Activated CD8-positive, alpha-beta T cell treated with anti-CD3 and anti-CD28 coated beads for 36 hours (primary cell): ENCODE measurements at regions of chr20 and their contacts with region 1.

Region 1: DNA sequence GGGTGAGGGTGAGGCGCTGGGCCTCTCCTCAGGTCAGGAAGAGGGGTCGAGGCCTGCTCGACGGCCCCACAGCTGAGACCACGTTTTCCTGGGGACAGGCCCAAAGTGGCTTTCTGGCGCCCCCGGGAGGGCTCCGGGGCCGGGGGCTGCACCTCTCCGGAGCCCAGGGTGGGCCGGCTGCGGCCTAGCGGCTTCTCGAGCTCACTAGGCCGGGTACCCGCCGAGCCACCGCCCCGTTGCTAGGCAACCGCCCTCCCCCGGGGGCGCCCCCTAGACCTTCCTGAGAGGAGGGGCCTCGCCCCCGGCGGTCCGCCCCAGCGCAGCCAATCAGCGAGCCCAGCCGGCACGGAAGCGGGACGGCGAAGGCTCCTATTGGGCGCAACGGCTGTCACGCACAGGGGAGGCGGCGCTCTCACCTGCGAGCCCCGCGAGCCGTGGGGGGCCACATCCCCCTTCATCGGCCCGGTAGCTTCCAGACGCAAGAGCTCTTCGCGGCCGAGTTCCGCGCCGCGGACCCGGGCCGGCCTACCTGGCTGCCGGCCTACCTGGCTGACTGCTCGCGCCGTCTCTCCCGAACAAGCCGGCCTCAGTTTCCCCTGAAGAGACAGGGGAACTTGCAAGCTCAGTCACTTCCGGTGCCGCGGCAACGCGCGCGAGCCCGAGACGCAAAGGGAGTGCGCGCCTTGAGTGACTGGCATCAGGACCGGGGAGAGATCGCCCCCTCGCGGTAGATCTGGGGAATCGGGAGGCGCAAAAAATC is 831 bp upstream of the BCL2L1 start:
- DNase-seq: peak; percentile 99
- ATAC-seq: peak; percentile 90
- H3K4me3 Mint-ChIP-seq: peak overlapping the region; percentile 97
- H3K27ac Mint-ChIP-seq: peak overlapping the region; percentile 97
- H3K4me1 Mint-ChIP-seq: peaks cover 4% of the 10 kb centered on the region
- H3K27me3 Mint-ChIP-seq: no peaks in the 10 kb centered on the region
- CTCF ChIP-seq: peak; percentile 94

Region 2: GRCh38 chr20:31605031-31605901 is 118.2 kb before region 1 on chr20 and contains the start of gene ID1:
- CTCF ChIA-PET with region 1: interaction called, 16 read pairs
- POLR2A ChIA-PET with region 1: no interaction called
- intact Hi-C with region 1: no loop called
- DNase-seq: peak; percentile 93
- ATAC-seq: peak; percentile 86
- H3K4me3 Mint-ChIP-seq: peak within 1 kb of the TSS; percentile 78
- H3K27ac Mint-ChIP-seq: no peak within 1 kb of the TSS
- H3K4me1 Mint-ChIP-seq: peaks cover 22% of the 10 kb centered on the region
- H3K27me3 Mint-ChIP-seq: peaks cover 49% of the 10 kb centered on the region
- CTCF ChIP-seq: no peak
- total RNA-seq, gene ID1: 0.41 to 0.54 TPM

Region 3: GRCh38 chr20:31637660-31638059 is 85.8 kb before region 1 on chr20 and contains the start of gene COX4I2:
- CTCF ChIA-PET with region 1: interaction called, 110 read pairs
- POLR2A ChIA-PET with region 1: interaction called, 5 read pairs
- intact Hi-C with region 1: no loop called
- DNase-seq: no peak
- ATAC-seq: no peak
- H3K4me3 Mint-ChIP-seq: no peak within 1 kb of the TSS
- H3K27ac Mint-ChIP-seq: no peak within 1 kb of the TSS
- H3K4me1 Mint-ChIP-seq: peaks cover 8% of the 10 kb centered on the region
- H3K27me3 Mint-ChIP-seq: peaks cover 4% of the 10 kb centered on the region
- CTCF ChIP-seq: no peak
- total RNA-seq, gene COX4I2: not detected

Region 4: DNA sequence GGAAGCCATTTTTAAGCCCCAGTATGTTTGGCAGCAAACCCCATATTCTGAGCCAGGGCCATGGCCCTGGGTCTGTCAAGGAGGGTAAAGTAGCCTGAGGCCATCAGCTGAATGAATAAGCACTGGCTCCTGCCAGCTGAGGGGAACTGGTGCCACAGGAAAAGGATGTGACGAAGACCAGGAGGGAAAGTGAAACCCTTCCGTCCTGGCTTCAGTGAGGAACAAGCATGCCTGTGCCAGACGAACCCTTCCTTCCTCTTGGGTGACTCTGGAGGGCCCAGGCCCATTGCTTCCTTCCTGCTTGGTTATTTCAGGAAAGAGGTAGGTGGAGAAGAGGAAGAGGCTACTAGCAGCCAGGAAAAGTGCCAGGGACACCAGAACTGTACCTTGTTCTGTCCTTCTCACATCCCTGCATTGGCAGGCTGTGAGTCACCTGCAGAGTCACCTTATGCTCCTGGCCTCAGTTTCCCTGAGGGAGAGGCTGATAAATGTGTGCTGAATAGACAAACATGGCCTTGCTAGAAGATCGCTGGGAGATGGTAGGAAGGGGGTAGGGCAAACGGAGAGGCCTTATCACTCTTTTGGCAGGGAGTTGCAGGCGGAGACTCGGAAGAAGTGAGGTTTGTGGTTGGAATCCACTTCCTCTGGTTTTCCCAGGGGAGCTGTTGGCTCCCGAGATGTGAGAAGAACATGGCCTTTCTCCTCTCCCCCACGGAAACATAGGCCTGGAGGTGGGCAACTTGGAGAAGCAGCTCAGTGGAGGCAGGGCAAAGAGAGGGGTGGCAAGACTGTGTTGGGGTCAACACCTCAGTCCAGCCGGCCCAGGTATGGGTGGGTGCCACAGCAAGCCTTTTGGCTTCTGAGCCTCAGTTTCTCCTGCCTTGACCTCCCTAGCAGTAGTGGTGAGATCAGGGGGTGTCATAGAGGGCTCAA is 48.3 kb before region 1 on chr20:
- CTCF ChIA-PET with region 1: interaction called, 131 read pairs
- POLR2A ChIA-PET with region 1: interaction called, 107 read pairs
- intact Hi-C with region 1: no loop called
- DNase-seq: peak; percentile 76
- ATAC-seq: peak; percentile 63
- H3K4me3 Mint-ChIP-seq: peak overlapping the region; percentile 77
- H3K27ac Mint-ChIP-seq: peak overlapping the region; percentile 97
- H3K4me1 Mint-ChIP-seq: peaks cover 80% of the 10 kb centered on the region
- H3K27me3 Mint-ChIP-seq: no peaks in the 10 kb centered on the region
- CTCF ChIP-seq: no peak

Region 5: GRCh38 chr20:31691646-31692275 is 31.7 kb before region 1 on chr20:
- CTCF ChIA-PET with region 1: interaction called, 12 read pairs
- POLR2A ChIA-PET with region 1: interaction called, 4 read pairs
- intact Hi-C with region 1: no loop called
- DNase-seq: no peak
- ATAC-seq: peak; percentile 48
- H3K4me3 Mint-ChIP-seq: peak overlapping the region; percentile 1
- H3K27ac Mint-ChIP-seq: peak overlapping the region; percentile 75
- H3K4me1 Mint-ChIP-seq: peaks cover 66% of the 10 kb centered on the region
- H3K27me3 Mint-ChIP-seq: no peaks in the 10 kb centered on the region
- CTCF ChIP-seq: no peak

Region 6: GRCh38 chr20:31704225-31705119 is 19.0 kb before region 1 on chr20:
- CTCF ChIA-PET with region 1: interaction called, 38 read pairs
- POLR2A ChIA-PET with region 1: interaction called, 17 read pairs
- intact Hi-C with region 1: no loop called
- DNase-seq: no peak
- ATAC-seq: no peak
- H3K4me3 Mint-ChIP-seq: no peak overlapping the region
- H3K27ac Mint-ChIP-seq: no peak overlapping the region
- H3K4me1 Mint-ChIP-seq: peaks cover 68% of the 10 kb centered on the region
- H3K27me3 Mint-ChIP-seq: no peaks in the 10 kb centered on the region
- CTCF ChIP-seq: no peak

Region 7: DNA sequence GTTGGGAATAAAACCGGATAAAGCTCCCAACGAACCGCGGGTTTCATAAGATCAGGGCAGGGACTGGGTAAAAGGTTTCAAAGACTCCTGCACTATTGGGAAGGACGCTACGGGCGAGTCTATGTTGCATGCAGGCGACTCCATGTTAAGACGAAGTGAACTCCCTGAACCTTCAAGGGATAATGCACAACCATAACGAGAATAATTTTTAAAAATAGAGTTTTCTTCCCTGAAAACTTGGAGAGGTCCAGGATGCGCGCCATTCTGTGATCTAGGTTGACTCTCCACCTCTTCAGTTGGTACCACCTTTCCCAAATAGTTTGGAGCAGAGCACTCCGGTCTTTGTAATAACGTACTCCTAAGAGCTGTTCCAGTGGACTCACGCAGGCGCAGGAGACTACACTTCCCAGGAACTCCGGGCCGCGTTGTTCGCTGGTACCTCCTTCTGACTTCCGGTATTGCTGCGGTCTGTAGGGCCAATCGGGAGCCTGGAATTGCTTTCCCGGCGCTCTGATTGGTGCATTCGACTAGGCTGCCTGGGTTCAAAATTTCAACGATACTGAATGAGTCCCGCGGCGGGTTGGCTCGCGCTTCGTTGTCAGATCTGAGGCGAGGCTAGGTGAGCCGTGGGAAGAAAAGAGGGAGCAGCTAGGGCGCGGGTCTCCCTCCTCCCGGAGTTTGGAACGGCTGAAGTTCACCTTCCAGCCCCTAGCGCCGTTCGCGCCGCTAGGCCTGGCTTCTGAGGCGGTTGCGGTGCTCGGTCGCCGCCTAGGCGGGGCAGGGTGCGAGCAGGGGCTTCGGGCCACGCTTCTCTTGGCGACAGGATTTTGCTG is 15.4 kb after region 1 on chr20 and contains the start of gene TPX2:
- CTCF ChIA-PET with region 1: interaction called, 17 read pairs
- POLR2A ChIA-PET with region 1: interaction called, 9 read pairs
- intact Hi-C with region 1: no loop called
- DNase-seq: peak; percentile 90
- ATAC-seq: peak; percentile 94
- H3K4me3 Mint-ChIP-seq: no peak within 1 kb of the TSS
- H3K27ac Mint-ChIP-seq: no peak within 1 kb of the TSS
- H3K4me1 Mint-ChIP-seq: peaks cover 3% of the 10 kb centered on the region
- H3K27me3 Mint-ChIP-seq: no peaks in the 10 kb centered on the region
- CTCF ChIP-seq: no peak
- total RNA-seq, gene TPX2: 112 to 113 TPM

Region 8: GRCh38 chr20:31760519-31761240 is 37.2 kb after region 1 on chr20:
- CTCF ChIA-PET with region 1: no interaction called
- POLR2A ChIA-PET with region 1: no interaction called
- intact Hi-C with region 1: no loop called
- DNase-seq: no peak
- ATAC-seq: no peak
- H3K4me3 Mint-ChIP-seq: no peak overlapping the region
- H3K27ac Mint-ChIP-seq: no peak overlapping the region
- H3K4me1 Mint-ChIP-seq: no peaks in the 10 kb centered on the region
- H3K27me3 Mint-ChIP-seq: no peaks in the 10 kb centered on the region
- CTCF ChIP-seq: no peak

Region 9: DNA sequence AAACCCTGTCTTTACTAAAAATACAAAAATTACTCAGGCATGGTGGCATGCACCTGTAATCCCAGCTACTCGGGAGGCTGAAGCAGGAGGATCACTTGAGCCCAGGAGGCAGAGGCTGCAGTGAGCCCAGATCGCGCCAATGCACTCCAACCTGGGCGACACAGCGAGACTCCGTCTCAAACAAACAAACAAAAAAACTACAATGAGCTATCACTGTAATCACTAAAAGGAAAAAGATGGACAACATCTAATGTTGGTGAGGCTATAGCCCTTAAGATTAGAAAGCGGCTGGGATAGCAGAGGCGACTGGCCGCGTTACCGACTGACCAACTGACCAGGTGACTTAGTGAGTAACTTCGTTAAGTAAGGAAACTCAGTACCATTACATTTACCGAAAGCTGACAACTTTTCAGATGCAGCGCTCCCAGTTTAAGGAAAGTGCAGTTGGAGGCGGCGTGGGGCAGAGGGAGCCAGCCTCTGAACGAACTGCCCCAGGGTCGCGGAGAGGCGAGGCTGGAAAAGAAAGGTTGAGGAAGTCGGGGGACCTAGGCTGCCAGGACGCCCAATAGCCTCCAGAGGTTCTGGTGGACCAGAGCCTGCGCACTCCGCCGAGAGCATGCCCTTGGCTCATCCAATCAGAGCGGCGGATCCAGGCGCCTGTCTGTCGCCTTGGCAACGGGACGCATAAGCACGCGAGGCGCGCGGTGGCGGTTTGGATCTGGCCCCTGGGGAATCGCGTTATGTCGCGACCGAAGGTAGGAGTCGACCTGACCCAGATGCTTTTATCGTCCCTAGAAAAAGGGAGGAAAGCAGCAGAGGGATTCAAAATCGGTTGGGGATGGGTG is 155.9 kb after region 1 on chr20:
- CTCF ChIA-PET with region 1: no interaction called
- POLR2A ChIA-PET with region 1: no interaction called
- intact Hi-C with region 1: no loop called
- DNase-seq: peak; percentile 88
- ATAC-seq: peak; percentile 90
- H3K4me3 Mint-ChIP-seq: peak overlapping the region; percentile 78
- H3K27ac Mint-ChIP-seq: peak overlapping the region; percentile 75
- H3K4me1 Mint-ChIP-seq: peaks cover 2% of the 10 kb centered on the region
- H3K27me3 Mint-ChIP-seq: peaks cover 4% of the 10 kb centered on the region
- CTCF ChIP-seq: no peak